Naive thymus-derived CD4-positive, alpha-beta T cell (primary cell): ENCODE measurements at regions of chr22 and their contacts with region 1.

Region 1: DNA sequence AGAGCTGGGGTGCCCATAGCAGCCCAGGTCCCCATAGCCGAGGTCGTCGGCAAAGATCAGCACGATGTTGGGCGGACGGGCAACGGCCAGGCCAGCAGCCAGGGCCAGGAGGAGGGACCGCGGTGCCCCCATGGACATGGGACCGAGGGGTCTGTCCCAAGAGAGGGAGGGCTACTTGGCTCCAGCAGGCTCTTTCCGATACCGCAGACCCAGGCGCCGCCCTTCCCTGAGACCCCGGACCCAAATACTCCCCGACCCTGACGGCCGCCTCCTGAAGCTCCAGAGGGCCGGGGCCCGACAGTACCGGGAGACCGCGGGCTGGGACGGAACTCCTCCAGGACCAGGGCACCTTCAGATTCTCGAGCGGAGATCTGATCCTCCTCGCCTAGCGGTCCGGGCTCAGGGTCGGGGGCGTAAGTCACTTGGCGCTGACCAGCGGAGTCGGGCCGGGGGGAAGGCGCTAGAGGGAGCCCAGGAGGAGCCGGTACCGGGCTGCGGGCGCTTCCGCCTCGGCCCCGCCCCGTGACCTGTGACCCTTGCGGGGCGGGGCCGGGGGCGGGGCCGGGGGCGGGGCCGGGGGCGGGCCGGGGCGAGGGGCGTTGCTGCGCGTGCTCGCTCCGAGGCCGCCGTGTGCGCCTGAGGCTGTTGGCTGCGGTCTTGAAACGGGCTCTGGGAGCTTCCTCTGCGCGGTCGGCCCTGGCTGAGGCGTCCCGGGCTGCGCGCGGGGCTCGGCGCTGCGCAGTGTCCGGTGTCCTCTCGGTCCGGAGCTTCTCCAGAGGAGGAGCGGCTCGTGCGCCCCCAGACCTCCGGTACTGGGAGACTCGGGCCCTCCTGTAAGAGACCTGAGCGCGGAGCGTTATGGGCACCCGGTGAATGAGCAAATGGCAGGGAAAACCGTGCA is at the start of gene ARSA:
- DNase-seq: peak; percentile 63 to 82 (median 77)
- ATAC-seq: peak; percentile 95
- H3K4me3 ChIP-seq: peak within 1 kb of the TSS; percentile 77
- H3K4me3 Mint-ChIP-seq: peak within 1 kb of the TSS; percentile 87 to 99 (median 92)
- H3K27ac ChIP-seq: peak within 1 kb of the TSS; percentile 90
- H3K27ac Mint-ChIP-seq: peak within 1 kb of the TSS; percentile 75 to 98 (median 91)
- H3K4me1 ChIP-seq: peaks cover 15 to 18% of the 10 kb centered on the region in 2 donors
- H3K4me1 Mint-ChIP-seq: peaks cover 19 to 30% (median 23%) of the 10 kb centered on the region in 7 donors
- H3K27me3 ChIP-seq: no peaks in the 10 kb centered on the region
- H3K27me3 Mint-ChIP-seq: no peaks in the 10 kb centered on the region
- total RNA-seq, gene ARSA: 64.3 to 96.3 (median 68.7) TPM

Region 2: DNA sequence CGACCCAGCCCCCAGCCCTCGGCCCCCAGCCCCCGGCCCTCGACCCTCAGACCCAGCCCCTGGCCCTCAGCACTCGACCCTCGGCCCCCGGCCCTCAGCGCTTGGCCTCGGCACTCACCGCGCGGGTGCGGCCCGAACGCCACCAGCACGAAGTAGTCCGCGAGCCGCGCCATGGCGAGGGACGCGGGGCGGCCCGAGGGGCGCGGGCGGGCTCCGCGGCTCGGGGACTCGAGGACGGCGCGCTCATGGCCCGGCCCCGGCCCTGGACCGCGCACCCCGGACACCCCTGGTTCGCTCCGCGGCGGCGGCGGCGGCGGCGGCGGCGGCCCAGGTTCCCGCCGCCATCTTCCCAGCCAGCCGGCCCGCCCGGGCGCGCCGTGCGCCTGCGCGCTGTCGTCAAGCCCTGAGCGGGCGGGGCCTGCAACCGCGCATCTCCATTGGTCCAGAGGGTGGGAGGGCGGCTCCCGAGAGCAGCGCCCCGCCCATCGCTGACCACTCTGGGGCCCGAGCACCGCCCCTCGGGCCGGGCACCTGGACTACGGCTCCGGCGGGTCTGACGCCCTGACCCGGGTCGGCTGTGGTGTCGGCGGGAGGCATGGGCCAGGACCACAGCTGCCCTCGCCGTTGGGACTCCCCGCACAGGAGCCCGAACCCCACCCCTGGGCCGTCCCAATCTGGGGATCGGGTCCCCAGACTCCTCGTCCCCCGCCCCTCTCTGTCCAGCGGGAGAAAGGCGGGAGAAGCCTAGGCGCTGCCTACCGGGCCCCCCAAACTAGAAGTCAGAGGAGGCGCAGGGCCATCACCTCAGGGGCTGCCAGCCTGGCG is 153.0 kb before region 1 on chr22 and contains the start of gene SBF1:
- CTCF ChIA-PET with region 1: no interaction called
- POLR2A ChIA-PET with region 1: interaction called, 3 read pairs
- intact Hi-C with region 1: loop called in 1 of 2 experiments (anchors 1 kb)
- DNase-seq: peak; percentile 75 to 94 (median 85)
- ATAC-seq: peak; percentile 89
- H3K4me3 ChIP-seq: peak within 1 kb of the TSS; percentile 72
- H3K4me3 Mint-ChIP-seq: peak within 1 kb of the TSS; percentile 93 to 100 (median 96)
- H3K27ac ChIP-seq: peak within 1 kb of the TSS; percentile 90
- H3K27ac Mint-ChIP-seq: peak within 1 kb of the TSS; percentile 91 to 97 (median 93)
- H3K4me1 ChIP-seq: peaks cover 39 to 42% of the 10 kb centered on the region in 2 donors
- H3K4me1 Mint-ChIP-seq: peaks cover 29 to 56% (median 47%) of the 10 kb centered on the region in 7 donors
- H3K27me3 ChIP-seq: no peaks in the 10 kb centered on the region
- H3K27me3 Mint-ChIP-seq: peaks cover 0 to 19% (median 0%) of the 10 kb centered on the region in 5 donors
- total RNA-seq, gene SBF1: 161 to 209 (median 181) TPM

Region 3: GRCh38 chr22:50612528-50613221 is 15.2 kb before region 1 on chr22:
- CTCF ChIA-PET with region 1: no interaction called
- POLR2A ChIA-PET with region 1: no interaction called
- intact Hi-C with region 1: loop called in 1 of 2 experiments (anchors 1 kb)
- DNase-seq: no peak
- ATAC-seq: peak; percentile 60
- H3K4me3 ChIP-seq: no peak overlapping the region
- H3K4me3 Mint-ChIP-seq: no peak overlapping the region
- H3K27ac ChIP-seq: no peak overlapping the region
- H3K27ac Mint-ChIP-seq: peak overlapping the region in 1 of 9 donors; percentile 24
- H3K4me1 ChIP-seq: no peaks in the 10 kb centered on the region
- H3K4me1 Mint-ChIP-seq: peaks cover 0 to 10% (median 3%) of the 10 kb centered on the region in 7 donors
- H3K27me3 ChIP-seq: no peaks in the 10 kb centered on the region
- H3K27me3 Mint-ChIP-seq: peaks cover 3 to 32% (median 10%) of the 10 kb centered on the region in 5 donors

Region 4: DNA sequence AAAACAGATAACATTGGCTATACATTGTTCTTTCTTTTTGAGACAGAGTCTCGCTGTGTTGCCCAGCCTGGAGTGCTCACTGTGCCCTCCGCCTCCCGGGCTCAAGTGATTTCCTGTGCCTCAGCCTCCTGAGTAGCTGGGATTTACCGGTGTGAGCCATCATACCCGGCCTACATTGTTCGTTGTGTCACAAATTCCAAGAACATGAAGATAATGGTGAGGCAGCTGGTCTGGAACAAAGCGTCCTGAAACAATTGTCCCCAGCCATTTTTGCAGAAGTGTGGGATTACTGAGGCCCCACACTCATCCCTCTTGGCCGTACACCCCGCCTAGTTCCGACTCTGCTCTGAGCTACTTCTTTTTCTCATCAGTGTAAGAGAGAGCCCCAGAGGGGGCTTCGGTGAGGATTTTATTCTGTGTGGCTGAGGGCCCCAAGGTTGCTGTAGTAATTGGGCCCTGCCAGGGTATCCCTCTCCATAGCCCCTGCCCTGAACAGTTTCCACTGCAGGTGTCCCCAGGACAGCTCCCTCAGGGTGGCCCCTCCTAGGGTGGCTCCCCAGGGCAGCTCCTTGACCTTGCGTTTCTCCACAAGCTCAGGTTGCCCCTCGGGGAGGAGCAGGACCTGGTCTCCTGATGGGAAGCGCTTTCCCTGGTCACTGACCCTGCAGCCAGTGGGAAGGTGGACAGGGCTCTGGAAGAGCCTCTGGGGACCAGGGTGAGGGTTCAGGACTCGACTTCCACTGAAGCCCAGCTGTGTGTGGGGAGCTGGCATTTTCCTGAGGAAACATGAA is 13.2 kb after region 1 on chr22:
- CTCF ChIA-PET with region 1: no interaction called
- POLR2A ChIA-PET with region 1: no interaction called
- intact Hi-C with region 1: no loop called
- DNase-seq: no peak
- ATAC-seq: no peak
- H3K4me3 ChIP-seq: no peak overlapping the region
- H3K4me3 Mint-ChIP-seq: no peak overlapping the region
- H3K27ac ChIP-seq: no peak overlapping the region
- H3K27ac Mint-ChIP-seq: no peak overlapping the region
- H3K4me1 ChIP-seq: no peaks in the 10 kb centered on the region
- H3K4me1 Mint-ChIP-seq: peaks cover 0 to 4% (median 0%) of the 10 kb centered on the region in 7 donors
- H3K27me3 ChIP-seq: peaks cover 0 to 4% of the 10 kb centered on the region in 2 donors
- H3K27me3 Mint-ChIP-seq: peaks cover 0 to 18% (median 5%) of the 10 kb centered on the region in 5 donors

Region 5: DNA sequence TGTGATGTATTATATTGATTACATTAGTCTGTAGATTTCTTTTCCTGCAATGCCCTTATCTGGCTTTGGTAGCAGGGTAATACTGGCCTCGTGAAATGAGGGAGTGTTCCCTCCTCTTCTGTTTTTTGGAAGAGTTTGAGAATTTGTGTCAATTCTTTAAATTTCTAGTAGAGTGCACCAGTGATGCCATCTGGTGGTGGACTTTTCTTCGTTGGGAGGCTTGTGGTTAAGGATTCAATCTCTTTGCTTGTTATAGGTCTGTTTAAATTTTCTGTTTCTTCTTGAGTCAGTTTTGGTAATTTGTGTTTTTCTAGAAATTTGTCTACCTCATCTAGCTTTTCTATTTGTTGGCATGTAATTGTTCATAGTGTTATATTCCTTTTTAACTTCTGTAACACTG is 63.6 kb after region 1 on chr22:
- CTCF ChIA-PET with region 1: no interaction called
- POLR2A ChIA-PET with region 1: no interaction called
- intact Hi-C with region 1: loop called (anchors 1 kb)
- DNase-seq: peak in 6 of 9 donors; percentile 16 to 45 (median 34)
- ATAC-seq: no peak
- H3K4me3 ChIP-seq: no peak overlapping the region
- H3K4me3 Mint-ChIP-seq: no peak overlapping the region
- H3K27ac ChIP-seq: no peak overlapping the region
- H3K27ac Mint-ChIP-seq: no peak overlapping the region
- H3K4me1 ChIP-seq: no peaks in the 10 kb centered on the region
- H3K4me1 Mint-ChIP-seq: peaks cover 0 to 7% (median 0%) of the 10 kb centered on the region in 7 donors
- H3K27me3 ChIP-seq: no peaks in the 10 kb centered on the region
- H3K27me3 Mint-ChIP-seq: peaks cover 0 to 23% (median 0%) of the 10 kb centered on the region in 5 donors